ENCODE measurements at regions of chr4 and their contacts with region 1.

Region 1: GRCh38 chr4:6709230-6710114 is at the start of gene MRFAP1L1:
- DNase-seq: peak; percentile 99
- H3K4me3 ChIP-seq: peak within 1 kb of the TSS; percentile 92
- H3K27ac ChIP-seq: peak within 1 kb of the TSS; percentile 73
- H3K4me1 ChIP-seq: peaks cover 41% of the 10 kb centered on the region
- CTCF ChIP-seq: peak; percentile 35; the same call in 1 of the 2 replicates
- total RNA-seq, gene MRFAP1L1: 50.5 and 79.2 TPM in 2 replicates

Region 2: GRCh38 chr4:6640292-6641163 is 68.9 kb before region 1 on chr4 and contains the start of gene MRFAP1:
- CTCF ChIA-PET with region 1: interaction called, 4 read pairs
- POLR2A ChIA-PET with region 1: interaction called, 3 read pairs
- intact Hi-C with region 1: loop called (anchors 1 kb)
- DNase-seq: peak; percentile 96
- H3K4me3 ChIP-seq: peak within 1 kb of the TSS; percentile 87
- H3K27ac ChIP-seq: peak within 1 kb of the TSS; percentile 83
- H3K4me1 ChIP-seq: peaks cover 19% of the 10 kb centered on the region
- CTCF ChIP-seq: no peak
- total RNA-seq, gene MRFAP1: 90.8 and 142 TPM in 2 replicates

Region 3: DNA sequence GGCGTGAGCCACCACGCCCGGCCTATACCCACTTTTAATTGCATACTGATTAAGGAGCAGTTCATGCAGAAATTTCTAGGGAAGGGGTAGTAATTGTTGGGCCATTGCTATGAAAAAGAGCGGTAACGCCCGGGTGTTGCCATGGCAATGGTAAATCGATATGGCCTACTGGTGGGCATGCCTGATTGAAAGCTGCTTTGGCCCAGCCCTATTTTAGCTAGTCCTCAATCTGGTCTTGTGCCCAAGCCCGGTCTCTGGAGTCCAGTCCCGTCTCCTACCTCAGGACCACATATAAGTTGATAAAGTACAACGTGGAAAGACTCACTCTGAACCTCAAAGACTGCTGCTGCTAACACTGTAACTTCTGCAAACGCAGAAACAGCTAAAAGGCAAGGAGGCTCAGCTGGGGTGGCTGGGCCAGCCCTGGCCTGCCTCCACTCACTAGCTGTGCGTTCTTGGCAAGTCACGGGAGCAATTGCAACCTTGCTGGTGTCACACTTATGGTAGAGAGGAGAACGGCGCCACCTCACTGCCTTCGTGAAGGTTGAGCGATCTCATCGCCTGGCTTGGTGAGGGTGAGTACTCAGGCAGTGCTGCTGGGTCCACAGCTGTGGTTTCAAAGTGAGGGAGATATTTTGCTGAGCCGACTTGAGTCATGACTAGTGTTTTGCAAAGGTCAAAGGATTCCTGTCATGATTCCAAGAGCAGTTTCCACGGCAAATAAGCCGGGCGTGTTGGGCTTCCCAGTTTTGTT is 415.4 kb after region 1 on chr4:
- CTCF ChIA-PET with region 1: no interaction called
- POLR2A ChIA-PET with region 1: no interaction called
- intact Hi-C with region 1: no loop called
- DNase-seq: peak; percentile 11
- H3K4me3 ChIP-seq: no peak overlapping the region
- H3K27ac ChIP-seq: no peak overlapping the region
- H3K4me1 ChIP-seq: no peaks in the 10 kb centered on the region
- CTCF ChIP-seq: no peak

Measured in OCI-LY7 (cell line).